Breast epithelium (tissue), 4 donors: ENCODE measurements at regions of chr2 and their contacts with region 1.

Region 1: GRCh38 chr2:222064286-222064685 is 234.5 kb downstream of the PAX3 start:
- DNase-seq: no peak
- H3K4me3 ChIP-seq: no peak overlapping the region
- H3K27ac ChIP-seq: no peak overlapping the region
- H3K4me1 ChIP-seq: no peaks in the 10 kb centered on the region
- H3K27me3 ChIP-seq: no peaks in the 10 kb centered on the region
- CTCF ChIP-seq: no peak
- POLR2A ChIP-seq: no peak

Region 2: DNA sequence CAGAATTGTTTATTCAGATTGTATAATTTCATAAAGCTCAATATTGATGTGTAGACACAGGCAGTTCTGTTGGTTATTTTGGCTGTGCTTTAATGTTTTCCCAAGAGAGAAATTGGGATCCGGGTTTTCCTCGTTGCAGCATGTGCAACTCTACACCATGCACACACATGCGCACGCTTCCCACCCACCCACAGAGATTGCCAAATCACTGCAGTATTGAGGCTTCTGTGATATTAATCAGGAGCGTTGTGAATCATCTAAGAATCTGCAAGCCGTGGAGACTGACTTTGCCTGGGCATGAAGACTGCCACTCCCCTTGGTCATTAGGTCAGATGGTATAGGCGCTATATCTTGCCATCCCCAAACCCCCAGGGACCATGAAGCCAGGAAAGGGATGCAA is 1865.4 kb before region 1 on chr2:
- intact Hi-C with region 1: no loop called
- DNase-seq: no peak
- H3K4me3 ChIP-seq: no peak overlapping the region
- H3K27ac ChIP-seq: no peak overlapping the region
- H3K4me1 ChIP-seq: peaks cover 0 to 6% of the 10 kb centered on the region in 2 donors
- H3K27me3 ChIP-seq: no peaks in the 10 kb centered on the region
- CTCF ChIP-seq: no peak
- POLR2A ChIP-seq: no peak

Region 3: GRCh38 chr2:222076973-222077691 is 12.8 kb after region 1 on chr2:
- intact Hi-C with region 1: loop called (anchors 1 kb)
- DNase-seq: no peak
- H3K4me3 ChIP-seq: no peak overlapping the region
- H3K27ac ChIP-seq: no peak overlapping the region
- H3K4me1 ChIP-seq: no peaks in the 10 kb centered on the region
- H3K27me3 ChIP-seq: peaks cover 0 to 5% of the 10 kb centered on the region in 2 donors
- CTCF ChIP-seq: no peak
- POLR2A ChIP-seq: no peak

Region 4: DNA sequence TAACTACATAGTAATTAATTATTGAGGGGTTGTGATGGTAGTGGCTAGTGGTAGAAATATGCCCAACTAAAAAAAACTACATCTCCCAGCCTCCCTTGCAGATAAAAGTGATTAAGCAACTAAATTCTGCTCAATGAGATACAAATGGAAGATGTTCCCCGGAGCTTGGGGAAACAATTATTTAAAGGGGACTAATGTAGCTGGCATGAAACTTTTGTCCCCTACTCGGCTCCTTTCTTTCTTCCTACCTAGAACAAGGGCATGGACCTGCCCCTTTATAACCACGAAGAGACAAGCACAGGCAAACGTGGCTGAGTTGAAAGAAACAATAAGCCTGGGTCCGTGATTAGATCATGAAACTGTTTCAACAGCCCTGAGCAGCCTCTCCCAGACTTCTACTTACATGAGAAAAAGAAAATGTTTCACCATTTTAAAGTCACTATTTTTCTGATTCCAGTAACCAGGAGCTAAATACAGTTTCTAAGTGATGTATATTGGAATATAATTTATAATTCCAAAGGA is 1300.9 kb after region 1 on chr2:
- intact Hi-C with region 1: no loop called
- DNase-seq: no peak
- H3K4me3 ChIP-seq: no peak overlapping the region
- H3K27ac ChIP-seq: no peak overlapping the region
- H3K4me1 ChIP-seq: no peaks in the 10 kb centered on the region
- H3K27me3 ChIP-seq: no peaks in the 10 kb centered on the region
- CTCF ChIP-seq: no peak
- POLR2A ChIP-seq: no peak